AG04449 (cell line): ENCODE measurements at regions of chr2 and their contacts with region 1.

Region 1: DNA sequence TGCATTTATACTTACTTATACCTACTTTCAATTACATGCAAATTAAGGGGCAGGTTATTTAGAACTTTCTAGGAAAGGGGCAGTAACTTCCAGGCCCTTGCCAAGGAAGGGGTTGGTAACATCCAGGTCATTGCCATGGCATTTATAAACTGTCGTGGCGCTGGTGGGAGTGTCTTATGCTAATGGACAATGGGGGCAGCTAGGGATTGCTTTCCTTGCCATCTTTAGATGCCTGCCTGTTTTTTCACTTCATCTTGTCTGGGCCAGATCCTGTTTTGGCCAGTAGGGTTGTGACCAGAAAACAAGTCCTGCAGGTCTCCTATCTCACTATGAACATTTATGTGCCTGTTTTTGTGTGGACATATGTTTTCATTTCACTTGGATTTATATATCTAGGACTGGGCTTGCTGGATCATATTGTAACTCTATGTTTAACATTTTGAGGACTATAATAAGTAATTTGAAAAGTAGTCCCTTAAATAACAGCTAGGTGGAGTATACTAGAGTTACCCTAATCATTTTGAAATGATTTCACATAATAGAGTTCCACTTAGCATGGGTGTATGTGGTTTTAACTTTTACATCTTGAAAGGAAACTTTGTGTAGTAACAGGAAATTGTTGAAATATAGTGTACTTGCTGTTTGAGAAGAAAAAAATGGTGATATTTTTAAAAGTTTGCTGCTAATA is 56.1 kb downstream of the LCLAT1 start:
- DNase-seq: no peak
- H3K4me3 ChIP-seq: no peak overlapping the region
- CTCF ChIP-seq: no peak

Region 2: GRCh38 chr2:30492185-30492584 is 11.0 kb before region 1 on chr2:
- CTCF ChIA-PET with region 1: interaction called, 14 read pairs
- POLR2A ChIA-PET with region 1: no interaction called
- DNase-seq: no peak
- H3K4me3 ChIP-seq: no peak overlapping the region
- CTCF ChIP-seq: no peak